Mammary epithelial cell (primary cell): ENCODE measurements at regions of chr7 and their contacts with region 1.

Region 1: GRCh38 chr7:490461-491291 is 29.0 kb downstream of the PDGFA start:
- DNase-seq: peak; percentile 70
- H3K4me3 ChIP-seq: no peak overlapping the region
- H3K27ac ChIP-seq: no peak overlapping the region
- H3K4me1 ChIP-seq: peaks cover 31% of the 10 kb centered on the region
- H3K27me3 ChIP-seq: no peaks in the 10 kb centered on the region
- CTCF ChIP-seq: no peak

Region 2: DNA sequence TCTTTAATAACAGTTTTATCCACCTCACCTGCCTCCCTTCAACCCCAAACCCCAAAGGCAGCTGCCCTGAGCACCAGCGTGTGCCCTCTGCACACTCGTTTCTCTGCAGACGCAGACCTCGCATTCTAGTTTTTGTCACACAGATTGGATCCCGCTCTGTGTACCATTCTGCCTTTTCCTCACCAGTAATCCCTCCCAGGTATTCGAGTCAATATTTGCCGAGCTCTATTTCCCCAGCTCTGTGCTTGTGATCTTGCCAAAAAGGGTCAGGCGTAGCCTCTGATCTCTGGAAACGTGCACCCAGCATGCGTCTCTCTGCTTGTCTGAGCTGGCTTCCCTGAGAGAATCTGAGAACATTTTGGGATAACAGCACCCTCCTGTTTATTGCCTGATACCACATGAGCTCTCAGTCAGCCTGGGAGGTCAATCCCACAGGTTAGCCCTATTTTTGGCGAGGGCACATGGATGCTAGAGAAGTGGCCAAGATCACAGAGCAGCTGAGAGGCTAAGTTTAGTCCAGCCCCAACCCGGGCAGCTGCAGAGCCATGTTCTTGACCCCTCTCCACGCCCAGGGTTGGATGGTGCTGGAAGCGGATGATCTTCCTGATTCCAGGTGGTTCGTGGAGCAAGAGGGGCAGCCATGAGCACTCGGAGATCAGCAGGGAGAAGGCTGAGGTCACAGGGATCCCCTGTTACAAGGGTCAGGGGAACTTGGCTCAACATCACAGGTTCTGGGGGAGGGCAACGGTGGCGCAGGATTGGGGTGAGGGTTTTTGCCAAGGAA is 171.6 kb before region 1 on chr7:
- CTCF ChIA-PET with region 1: no interaction called
- dilution Hi-C with region 1: no loop called
- in situ Hi-C with region 1: no loop called
- intact Hi-C with region 1: no loop called
- DNase-seq: no peak
- H3K4me3 ChIP-seq: no peak overlapping the region
- H3K27ac ChIP-seq: no peak overlapping the region
- H3K4me1 ChIP-seq: no peaks in the 10 kb centered on the region
- H3K27me3 ChIP-seq: no peaks in the 10 kb centered on the region
- CTCF ChIP-seq: no peak

Region 3: DNA sequence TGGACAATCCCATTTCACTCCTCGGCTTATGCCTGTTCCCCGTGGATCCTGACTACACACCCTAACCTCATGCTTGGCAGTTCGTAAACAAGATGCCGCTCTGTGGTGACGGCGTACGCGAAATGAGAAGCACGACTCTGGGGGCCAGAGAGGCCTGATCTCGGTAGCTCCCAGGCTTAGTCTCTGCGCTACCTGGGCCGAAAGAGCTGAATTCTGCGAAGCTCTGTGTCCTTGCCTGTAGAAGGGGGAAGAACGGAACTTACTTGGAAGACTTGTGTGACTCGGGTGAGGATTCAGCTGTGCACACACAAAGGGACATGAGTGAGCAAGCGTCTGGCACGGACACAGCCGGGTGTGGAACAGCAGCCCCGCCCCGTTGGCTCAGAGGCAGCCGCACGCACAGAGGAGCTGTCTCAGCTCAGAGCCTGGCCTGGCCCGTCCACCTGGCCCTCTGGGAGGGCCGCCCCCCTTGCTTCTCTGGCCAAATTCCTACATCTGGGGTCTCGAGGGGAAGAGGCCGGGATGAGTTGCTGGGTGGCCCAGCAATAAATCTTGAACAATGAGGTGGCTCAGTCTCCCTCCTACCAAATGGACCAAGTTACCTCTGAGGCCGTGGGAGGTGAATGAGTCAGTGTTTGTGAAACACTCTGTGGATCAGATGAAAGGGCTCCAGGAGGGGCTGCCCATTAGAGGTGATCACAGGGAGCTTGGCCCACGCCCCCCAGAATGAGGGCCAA is 54.9 kb before region 1 on chr7:
- CTCF ChIA-PET with region 1: no interaction called
- dilution Hi-C with region 1: loop called (anchors 10 kb)
- in situ Hi-C with region 1: no loop called
- intact Hi-C with region 1: no loop called
- DNase-seq: peak; percentile 47
- H3K4me3 ChIP-seq: no peak overlapping the region
- H3K27ac ChIP-seq: no peak overlapping the region
- H3K4me1 ChIP-seq: peaks cover 13% of the 10 kb centered on the region
- H3K27me3 ChIP-seq: no peaks in the 10 kb centered on the region
- CTCF ChIP-seq: no peak

Region 4: DNA sequence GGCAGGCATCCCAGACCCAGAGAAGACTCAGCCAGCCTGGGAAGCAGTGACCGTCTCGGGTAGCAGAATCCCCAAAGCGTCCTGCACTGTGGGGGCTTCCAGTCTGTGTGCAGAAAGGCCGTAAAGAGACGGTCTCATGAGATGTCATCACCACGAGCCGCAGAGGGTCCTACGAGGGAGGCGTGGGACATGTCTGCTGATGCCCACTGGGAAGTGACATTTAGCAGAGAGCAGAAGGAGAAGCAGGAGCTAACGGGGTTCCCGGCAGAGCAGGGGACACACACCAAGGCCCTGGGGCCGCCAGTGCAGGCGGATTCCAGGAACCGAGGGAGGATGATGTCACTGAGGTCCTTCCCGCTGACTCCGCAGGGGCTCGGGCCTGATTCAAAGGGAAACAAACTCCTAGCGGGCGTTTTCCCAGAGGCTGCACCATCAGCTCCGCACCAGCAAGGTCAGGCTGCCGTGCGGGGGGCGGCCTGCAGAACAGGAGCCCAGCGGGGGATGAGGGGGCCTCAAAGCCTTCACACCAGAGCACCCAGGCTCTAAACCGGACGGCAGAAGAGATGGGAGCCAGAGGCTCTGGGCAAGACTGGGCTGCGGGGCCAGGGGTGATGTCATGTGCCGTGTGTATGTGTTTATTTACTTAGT is 114.3 kb after region 1 on chr7:
- CTCF ChIA-PET with region 1: no interaction called
- dilution Hi-C with region 1: loop called (anchors 5 kb)
- in situ Hi-C with region 1: no loop called
- intact Hi-C with region 1: no loop called
- DNase-seq: no peak
- H3K4me3 ChIP-seq: no peak overlapping the region
- H3K27ac ChIP-seq: no peak overlapping the region
- H3K4me1 ChIP-seq: peaks cover 3% of the 10 kb centered on the region
- H3K27me3 ChIP-seq: no peaks in the 10 kb centered on the region
- CTCF ChIP-seq: no peak

Region 5: GRCh38 chr7:641269-641671 is 150.6 kb after region 1 on chr7:
- CTCF ChIA-PET with region 1: no interaction called
- dilution Hi-C with region 1: no loop called
- in situ Hi-C with region 1: no loop called
- intact Hi-C with region 1: no loop called
- DNase-seq: no peak
- H3K4me3 ChIP-seq: no peak overlapping the region
- H3K27ac ChIP-seq: no peak overlapping the region
- H3K4me1 ChIP-seq: no peaks in the 10 kb centered on the region
- H3K27me3 ChIP-seq: no peaks in the 10 kb centered on the region
- CTCF ChIP-seq: no peak

Region 6: GRCh38 chr7:786472-787255 is 296.0 kb after region 1 on chr7:
- CTCF ChIA-PET with region 1: no interaction called
- dilution Hi-C with region 1: loop called (anchors 10 kb)
- in situ Hi-C with region 1: no loop called
- intact Hi-C with region 1: no loop called
- DNase-seq: peak; percentile 34
- H3K4me3 ChIP-seq: no peak overlapping the region
- H3K27ac ChIP-seq: no peak overlapping the region
- H3K4me1 ChIP-seq: no peaks in the 10 kb centered on the region
- H3K27me3 ChIP-seq: no peaks in the 10 kb centered on the region
- CTCF ChIP-seq: peak; percentile 80 to 97

Region 7: GRCh38 chr7:954330-955238 is 463.9 kb after region 1 on chr7 and contains the start of gene ADAP1:
- CTCF ChIA-PET with region 1: no interaction called
- dilution Hi-C with region 1: loop called (anchors 5 kb)
- in situ Hi-C with region 1: no loop called
- intact Hi-C with region 1: no loop called
- DNase-seq: peak; percentile 41
- H3K4me3 ChIP-seq: peak within 1 kb of the TSS; percentile 59 to 68 (median 66)
- H3K27ac ChIP-seq: no peak within 1 kb of the TSS
- H3K4me1 ChIP-seq: peaks cover 14% of the 10 kb centered on the region
- H3K27me3 ChIP-seq: no peaks in the 10 kb centered on the region
- CTCF ChIP-seq: peak in 1 of 2 donors; percentile 41
- total RNA-seq, gene ADAP1: 11.0 to 21.4 TPM